ENCODE measurements at regions of chr5 and their contacts with region 1.

Region 1: GRCh38 chr5:32837211-32837610 is 126.1 kb downstream of the NPR3 start:
- DNase-seq: no peak
- H3K4me3 ChIP-seq: no peak overlapping the region
- CTCF ChIP-seq: no peak

Region 2: DNA sequence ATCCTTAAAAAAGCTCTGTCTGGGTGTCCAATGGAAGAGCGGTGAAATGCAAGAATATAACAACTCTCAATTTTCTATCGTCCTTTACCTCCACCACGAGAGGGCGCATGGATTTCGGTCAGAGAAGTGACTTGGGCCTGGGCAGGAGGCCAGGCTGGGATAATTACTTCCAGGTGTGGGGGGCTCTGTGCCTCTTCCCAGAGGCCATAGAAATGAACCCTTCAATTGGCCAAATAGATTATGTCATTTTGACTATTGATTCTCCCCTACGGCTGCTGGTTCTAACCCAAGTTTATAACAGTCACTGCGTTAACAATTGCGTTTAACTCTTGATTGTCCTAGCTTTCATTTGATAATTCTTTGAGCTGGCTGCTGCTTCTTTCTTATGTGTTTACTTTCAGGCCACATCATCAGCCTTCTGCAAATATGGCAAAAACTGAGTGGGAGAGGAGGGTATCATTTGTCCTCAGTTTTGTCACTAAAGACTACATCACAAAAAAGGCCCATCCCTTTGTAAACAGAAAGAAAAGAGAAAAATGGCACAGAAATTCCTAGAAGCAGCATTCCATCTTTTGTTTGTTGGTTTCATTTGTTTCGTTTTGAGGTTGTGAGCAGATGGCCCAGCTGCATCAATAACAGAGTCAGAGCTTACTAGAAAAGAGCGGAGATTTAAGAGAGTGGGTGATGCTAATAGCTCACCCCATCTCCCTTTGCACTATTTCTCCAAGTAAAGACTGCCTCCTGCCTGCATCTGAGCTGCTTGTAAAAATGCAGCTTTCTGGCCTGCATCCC is 347.2 kb before region 1 on chr5:
- CTCF ChIA-PET with region 1: no interaction called
- POLR2A ChIA-PET with region 1: no interaction called
- DNase-seq: no peak
- H3K4me3 ChIP-seq: no peak overlapping the region; the same call in 1 of the 2 replicates
- CTCF ChIP-seq: peak; percentile 65

Region 3: GRCh38 chr5:32852535-32852934 is 15.3 kb after region 1 on chr5:
- CTCF ChIA-PET with region 1: interaction called, 17 read pairs
- POLR2A ChIA-PET with region 1: no interaction called
- DNase-seq: peak; percentile 53
- H3K4me3 ChIP-seq: no peak overlapping the region
- CTCF ChIP-seq: peak; percentile 16

Region 4: GRCh38 chr5:32865475-32865874 is 28.3 kb after region 1 on chr5:
- CTCF ChIA-PET with region 1: no interaction called
- POLR2A ChIA-PET with region 1: no interaction called
- DNase-seq: no peak
- H3K4me3 ChIP-seq: no peak overlapping the region
- CTCF ChIP-seq: no peak